MCF 10A (cell line): ENCODE measurements at regions of chr7 and their contacts with region 1.

Region 1: DNA sequence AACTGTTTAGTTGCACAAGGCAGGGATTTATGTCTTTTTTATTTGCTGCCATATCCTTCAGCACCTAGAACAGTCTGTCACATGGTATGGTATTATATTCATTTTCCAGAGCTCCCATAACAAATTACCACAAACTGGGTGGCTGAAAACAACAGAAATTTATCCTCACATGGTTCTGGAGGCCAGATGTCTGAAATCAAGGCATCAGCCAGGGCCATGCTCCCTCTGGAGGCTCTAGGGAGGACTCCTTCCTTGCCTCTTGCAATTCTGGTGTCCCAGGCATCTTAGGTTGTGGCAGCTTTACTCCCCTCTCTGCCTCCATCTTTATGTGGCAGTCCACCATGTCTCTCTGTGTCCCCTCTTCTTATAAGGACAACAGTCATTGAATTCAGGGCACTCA is 43.1 kb downstream of the MET start:
- DNase-seq: no peak
- H3K4me3 Mint-ChIP-seq: no peak overlapping the region
- H3K27ac Mint-ChIP-seq: peak overlapping the region; percentile 84
- H3K4me1 Mint-ChIP-seq: peaks cover 43% of the 10 kb centered on the region
- H3K27me3 Mint-ChIP-seq: no peaks in the 10 kb centered on the region
- CTCF ChIP-seq: no peak

Region 2: DNA sequence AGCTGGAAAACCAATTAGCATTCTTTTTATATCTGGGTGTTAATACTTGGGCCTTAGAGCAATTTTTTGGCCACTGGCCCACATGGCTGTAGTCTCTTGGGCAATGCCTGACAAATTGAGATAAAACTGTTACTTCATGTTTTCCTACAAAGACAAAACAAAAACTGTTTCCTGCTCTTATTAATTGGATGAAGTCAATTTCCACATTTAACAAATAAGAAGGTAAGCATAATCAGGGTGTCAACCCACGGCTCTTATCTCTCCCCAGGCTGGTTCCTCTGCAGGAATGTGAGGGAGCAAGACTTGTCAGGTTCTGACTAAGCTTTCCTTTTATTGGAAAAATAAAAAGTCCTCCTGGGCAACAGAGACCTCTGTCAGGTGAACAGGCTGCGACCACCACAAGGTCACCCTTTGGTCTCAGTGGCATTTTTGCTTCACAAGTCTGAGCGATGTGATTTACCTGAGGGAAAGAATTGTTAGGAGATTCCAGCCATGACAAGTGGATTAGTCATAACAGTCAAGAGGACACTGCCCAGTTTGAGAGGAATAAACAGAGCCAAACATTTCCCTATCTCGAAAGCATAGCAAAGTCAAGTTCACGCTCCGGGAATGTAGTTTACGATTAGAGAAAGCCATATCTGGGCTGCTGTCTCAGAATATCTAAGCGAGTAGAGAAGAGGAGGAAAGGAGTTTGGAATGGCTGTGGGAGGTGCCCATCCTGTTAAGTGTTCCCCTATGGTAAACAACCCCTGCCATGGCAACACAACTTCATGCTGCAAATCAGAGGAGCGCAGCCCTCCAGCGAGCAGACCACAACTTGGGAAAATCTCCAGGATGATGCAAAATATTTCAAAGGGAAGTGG is 360.3 kb before region 1 on chr7:
- CTCF ChIA-PET with region 1: no interaction called
- POLR2A ChIA-PET with region 1: no interaction called
- intact Hi-C with region 1: no loop called
- DNase-seq: peak; percentile 91
- H3K4me3 Mint-ChIP-seq: peak overlapping the region; percentile 69
- H3K27ac Mint-ChIP-seq: peak overlapping the region; percentile 98
- H3K4me1 Mint-ChIP-seq: peaks cover 42% of the 10 kb centered on the region
- H3K27me3 Mint-ChIP-seq: no peaks in the 10 kb centered on the region
- CTCF ChIP-seq: no peak

Region 3: GRCh38 chr7:116698930-116699710 is 16.0 kb before region 1 on chr7:
- CTCF ChIA-PET with region 1: no interaction called
- POLR2A ChIA-PET with region 1: interaction called, 36 read pairs
- intact Hi-C with region 1: no loop called
- DNase-seq: no peak
- H3K4me3 Mint-ChIP-seq: no peak overlapping the region
- H3K27ac Mint-ChIP-seq: no peak overlapping the region
- H3K4me1 Mint-ChIP-seq: peaks cover 20% of the 10 kb centered on the region
- H3K27me3 Mint-ChIP-seq: no peaks in the 10 kb centered on the region
- CTCF ChIP-seq: no peak

Region 4: GRCh38 chr7:116726713-116727431 is 11.8 kb after region 1 on chr7:
- CTCF ChIA-PET with region 1: interaction called, 6 read pairs
- POLR2A ChIA-PET with region 1: interaction called, 17 read pairs
- intact Hi-C with region 1: no loop called
- DNase-seq: no peak
- H3K4me3 Mint-ChIP-seq: no peak overlapping the region
- H3K27ac Mint-ChIP-seq: peak overlapping the region; percentile 29
- H3K4me1 Mint-ChIP-seq: peaks cover 30% of the 10 kb centered on the region
- H3K27me3 Mint-ChIP-seq: no peaks in the 10 kb centered on the region
- CTCF ChIP-seq: no peak